PC-9 (cell line): ENCODE measurements at regions of chr19 and their contacts with region 1.

Region 1: GRCh38 chr19:7115721-7116120 is 46.2 kb downstream of the ZNF557 start:
- DNase-seq: no peak
- H3K4me3 ChIP-seq: no peak overlapping the region
- H3K27ac ChIP-seq: no peak overlapping the region
- H3K4me1 ChIP-seq: no peaks in the 10 kb centered on the region
- H3K27me3 ChIP-seq: no peaks in the 10 kb centered on the region
- CTCF ChIP-seq: no peak

Region 2: GRCh38 chr19:7442423-7442822 is 326.7 kb after region 1 on chr19:
- CTCF ChIA-PET with region 1: no interaction called
- POLR2A ChIA-PET with region 1: interaction called, 22 read pairs
- intact Hi-C with region 1: no loop called
- DNase-seq: no peak
- H3K4me3 ChIP-seq: no peak overlapping the region
- H3K27ac ChIP-seq: no peak overlapping the region
- H3K4me1 ChIP-seq: no peaks in the 10 kb centered on the region
- H3K27me3 ChIP-seq: no peaks in the 10 kb centered on the region
- CTCF ChIP-seq: no peak

Region 3: DNA sequence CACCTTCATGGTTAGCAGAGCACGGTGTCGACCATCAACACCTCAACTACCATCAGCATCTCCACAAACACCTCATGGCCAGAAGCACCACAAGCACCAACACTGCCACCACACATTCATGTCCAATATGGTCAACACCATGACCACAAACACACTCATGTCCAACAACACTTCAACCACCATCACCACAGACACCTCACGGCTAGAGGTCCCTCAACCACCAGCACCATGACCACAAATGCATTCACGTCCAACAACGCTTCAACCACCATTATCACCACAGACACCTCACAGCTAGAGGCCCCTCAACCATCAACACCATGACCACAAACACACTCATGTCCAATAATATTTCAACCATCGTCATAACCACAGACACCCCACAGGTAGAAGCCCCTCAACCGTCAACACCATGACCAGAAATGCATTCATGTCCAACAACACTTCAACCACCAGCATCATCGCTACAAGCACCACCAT is 575.1 kb after region 1 on chr19:
- CTCF ChIA-PET with region 1: no interaction called
- POLR2A ChIA-PET with region 1: interaction called, 17 read pairs
- intact Hi-C with region 1: no loop called
- DNase-seq: no peak
- H3K4me3 ChIP-seq: no peak overlapping the region
- H3K27ac ChIP-seq: no peak overlapping the region
- H3K4me1 ChIP-seq: peaks cover 1% of the 10 kb centered on the region; the same call in 1 of the 2 replicates
- H3K27me3 ChIP-seq: peaks cover 51% of the 10 kb centered on the region
- CTCF ChIP-seq: no peak